Dorsolateral prefrontal cortex (tissue), 120 donors: ENCODE measurements at regions of chr21 and their contacts with region 1.

Region 1: DNA sequence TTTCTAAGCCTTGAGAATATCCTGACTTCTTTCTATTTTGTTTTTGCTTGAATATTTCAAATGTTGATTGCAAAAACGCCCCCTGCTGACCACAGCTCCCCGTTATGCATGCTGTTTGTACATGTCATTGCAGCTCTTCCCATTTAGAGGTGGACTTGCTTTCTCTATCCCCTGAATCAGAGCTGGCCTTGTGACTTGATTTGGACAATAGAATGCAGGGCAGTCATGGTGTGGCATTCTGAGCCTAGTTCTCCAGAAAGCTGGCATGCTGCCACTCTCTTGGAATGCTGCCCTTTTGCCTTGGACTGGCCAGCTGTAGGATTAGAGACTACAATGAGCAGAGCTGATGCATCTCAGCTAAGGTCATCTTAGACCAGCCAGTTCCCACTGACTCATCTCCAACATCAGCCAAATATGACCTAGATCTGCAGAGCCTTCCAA is 1561.5 kb downstream of the MRPL39 start:
- DNase-seq: peak; percentile 36 to 100 (median 96)
- H3K4me3 ChIP-seq: peak overlapping the region in 23 of 59 donors; percentile 9 to 53 (median 28)
- H3K27ac ChIP-seq: peak overlapping the region in 57 of 59 donors; percentile 7 to 91 (median 74)
- H3K27me3 ChIP-seq: no peaks in the 10 kb centered on the region
- CTCF ChIP-seq: peak; percentile 24 to 84 (median 68)

Region 2: DNA sequence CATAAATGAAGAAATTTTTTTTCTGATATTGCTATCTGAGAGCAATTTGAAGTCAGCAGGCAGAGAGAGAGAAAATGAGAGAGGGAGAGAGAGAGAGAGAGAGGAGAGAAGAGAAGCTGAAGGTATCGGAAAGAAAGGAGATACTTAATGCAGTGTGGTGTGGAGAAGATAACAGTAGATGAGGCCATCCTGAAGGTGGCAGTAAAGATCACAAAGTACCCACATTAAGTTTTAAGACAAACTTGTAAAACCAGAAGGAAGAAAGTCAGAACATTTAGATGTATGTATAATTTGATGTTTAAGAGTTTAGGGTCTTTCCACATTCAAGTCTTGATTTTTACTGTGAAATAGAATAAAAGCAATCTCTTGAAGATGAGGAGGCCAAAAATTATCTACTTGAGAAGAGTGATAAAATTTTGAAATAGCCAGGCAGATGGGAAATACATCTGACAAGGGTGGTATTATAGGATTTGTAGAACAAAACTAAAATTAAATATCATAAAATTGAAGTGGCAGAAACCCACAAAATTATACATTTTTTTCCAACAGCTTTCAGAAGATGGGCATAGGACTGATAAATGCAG is 191.9 kb before region 1 on chr21:
- intact Hi-C with region 1: loop called (anchors 10 kb)
- DNase-seq: no peak
- H3K4me3 ChIP-seq: no peak overlapping the region
- H3K27ac ChIP-seq: no peak overlapping the region
- H3K27me3 ChIP-seq: peaks cover 0 to 6% (median 0%) of the 10 kb centered on the region in 45 donors
- CTCF ChIP-seq: peak; percentile 25 to 82 (median 66)

Region 3: DNA sequence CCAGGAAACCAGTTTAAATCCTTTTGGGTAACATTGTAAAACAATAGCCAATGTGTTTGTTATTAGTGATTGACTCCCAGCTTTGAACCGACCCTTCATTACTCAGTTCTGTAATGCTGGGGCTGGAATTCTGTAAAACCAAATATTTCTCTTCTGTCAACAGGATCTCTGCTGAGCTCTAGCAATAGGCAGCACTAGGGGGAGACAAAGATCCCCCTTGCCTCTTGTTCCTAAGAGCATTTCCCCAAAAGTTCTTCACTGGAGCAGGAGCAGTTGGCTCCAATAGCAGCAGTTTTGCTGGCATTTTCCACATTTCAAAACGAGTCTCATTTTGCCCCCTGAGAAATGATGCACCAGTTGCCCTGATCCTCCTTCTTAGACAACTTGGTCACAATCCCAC is 109.6 kb before region 1 on chr21:
- intact Hi-C with region 1: loop called in 1 of 2 experiments (anchors 2 kb)
- DNase-seq: peak in 3 of 10 donors; percentile 8 to 35 (median 19)
- H3K4me3 ChIP-seq: no peak overlapping the region
- H3K27ac ChIP-seq: peak overlapping the region in 1 of 59 donors; percentile 27
- H3K27me3 ChIP-seq: peaks cover 0 to 9% (median 0%) of the 10 kb centered on the region in 45 donors
- CTCF ChIP-seq: peak in 48 of 56 donors; percentile 15 to 71 (median 46)

Region 4: DNA sequence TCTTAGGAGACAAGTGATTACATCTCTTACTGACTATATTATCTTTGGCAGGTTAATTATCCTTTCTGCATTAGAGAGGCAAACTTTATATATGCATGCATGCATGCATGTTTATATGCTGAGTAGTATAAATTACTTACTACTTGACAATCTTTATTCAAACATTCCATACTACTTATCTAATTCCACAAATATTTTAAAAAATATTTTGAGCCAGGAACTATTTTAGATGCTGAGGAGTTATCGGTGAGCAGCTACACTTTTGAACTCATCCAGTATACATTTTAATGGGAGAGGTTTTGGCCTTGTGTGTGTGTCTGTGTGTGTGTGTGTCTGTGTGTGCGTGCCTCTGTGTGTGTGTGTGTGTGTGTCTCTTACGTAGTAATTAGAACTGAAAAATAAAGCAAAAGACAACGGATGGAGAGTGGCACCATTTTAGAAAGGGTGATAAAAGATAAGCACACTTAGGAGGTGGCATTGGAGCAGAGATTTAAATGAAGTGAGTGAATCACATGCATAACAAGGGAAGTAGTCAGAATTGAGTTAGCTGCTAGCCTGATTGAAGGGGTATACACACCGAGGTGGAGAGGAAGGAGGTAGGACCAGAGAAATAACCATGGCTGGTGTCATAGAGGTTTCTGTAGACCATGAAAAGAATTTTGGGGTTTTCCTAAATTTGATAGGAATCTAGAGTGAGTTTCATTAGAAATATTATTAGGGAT is 73.1 kb after region 1 on chr21:
- intact Hi-C with region 1: loop called (anchors 2 to 5 kb)
- DNase-seq: no peak
- H3K4me3 ChIP-seq: no peak overlapping the region
- H3K27ac ChIP-seq: no peak overlapping the region
- H3K27me3 ChIP-seq: no peaks in the 10 kb centered on the region
- CTCF ChIP-seq: no peak

Region 5: DNA sequence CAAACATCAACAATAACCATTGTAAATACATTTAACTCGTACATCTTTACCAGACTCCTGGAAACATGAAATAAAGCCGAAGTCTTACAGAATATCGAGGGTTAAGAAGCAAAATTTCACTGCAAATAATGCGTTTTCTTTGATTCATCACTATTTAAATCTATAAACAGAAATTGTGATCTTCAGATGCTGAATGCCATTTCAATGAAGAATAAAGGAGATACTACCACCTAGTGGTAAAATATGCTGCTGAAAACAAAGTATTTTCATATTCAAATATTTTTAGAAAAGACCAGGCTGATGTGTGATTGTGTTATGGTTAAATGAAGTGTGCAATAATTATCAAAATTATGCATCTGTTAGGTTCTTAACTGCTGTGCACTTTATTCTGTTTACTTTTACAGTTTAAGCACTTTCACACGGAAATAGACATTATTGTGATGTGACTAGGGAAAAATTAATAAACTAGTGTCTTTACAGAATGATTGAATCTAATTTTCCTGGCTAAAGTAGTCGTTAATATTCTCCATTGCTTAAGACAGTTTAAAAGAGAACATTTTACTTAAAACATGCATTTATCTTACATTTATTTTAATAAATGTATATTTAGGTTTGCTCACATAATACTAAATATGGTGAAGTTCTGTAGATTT is 468.4 kb after region 1 on chr21:
- intact Hi-C with region 1: loop called in 1 of 2 experiments (anchors 5 kb)
- DNase-seq: no peak
- H3K4me3 ChIP-seq: peak overlapping the region in 11 of 59 donors; percentile 1 to 53 (median 19)
- H3K27ac ChIP-seq: peak overlapping the region in 9 of 59 donors; percentile 7 to 61 (median 14)
- H3K27me3 ChIP-seq: no peaks in the 10 kb centered on the region
- CTCF ChIP-seq: peak; percentile 58 to 95 (median 76)